Heart right ventricle (tissue), 16 donors: ENCODE measurements at regions of chr5 and their contacts with region 1.

Region 1: DNA sequence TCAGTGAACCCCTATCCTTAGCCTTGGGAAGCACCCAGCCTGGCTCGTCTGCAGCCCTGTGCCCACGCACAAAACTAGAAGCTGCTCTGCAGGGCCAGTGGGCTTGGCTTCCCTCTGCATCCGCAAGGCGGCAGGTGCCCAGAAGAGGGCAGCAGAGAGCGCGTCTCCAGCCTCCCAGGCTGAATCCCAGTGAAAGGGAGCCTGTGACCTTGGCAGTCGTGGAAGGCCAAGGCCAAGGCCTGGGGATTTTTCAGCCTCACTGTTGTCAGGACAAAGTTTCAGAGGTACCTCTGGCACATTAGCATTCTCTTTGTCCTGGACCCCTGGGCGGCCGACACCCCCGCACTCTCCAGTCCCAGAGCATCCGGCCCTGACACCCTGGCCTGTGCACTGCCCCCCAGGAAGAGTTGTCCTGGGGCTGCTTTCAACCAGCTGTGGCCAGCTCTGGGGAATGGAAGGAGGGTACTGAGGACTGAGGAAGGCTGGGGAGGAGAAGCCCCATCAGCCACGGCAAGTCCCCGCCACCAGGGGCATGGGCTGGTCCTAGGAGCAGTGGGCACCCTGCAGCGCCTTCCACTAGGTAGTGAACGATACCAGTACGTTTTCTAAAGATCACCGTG is 63.6 kb upstream of the IL17B start:
- DNase-seq: peak; percentile 83 to 90
- ATAC-seq: peak; percentile 81 to 91 (median 90)
- H3K4me3 ChIP-seq: no peak overlapping the region
- H3K27ac ChIP-seq: peak overlapping the region; percentile 60 to 90 (median 85)
- H3K4me1 ChIP-seq: peaks cover 6 to 61% (median 36%) of the 10 kb centered on the region in 9 donors
- H3K27me3 ChIP-seq: no peaks in the 10 kb centered on the region
- CTCF ChIP-seq: peak; percentile 90 to 97 (median 94)

Region 2: GRCh38 chr5:149254506-149254905 is 188.2 kb before region 1 on chr5:
- intact Hi-C with region 1: no loop called
- DNase-seq: no peak
- ATAC-seq: no peak
- H3K4me3 ChIP-seq: no peak overlapping the region
- H3K27ac ChIP-seq: no peak overlapping the region
- H3K4me1 ChIP-seq: no peaks in the 10 kb centered on the region
- H3K27me3 ChIP-seq: no peaks in the 10 kb centered on the region
- CTCF ChIP-seq: no peak

Region 3: DNA sequence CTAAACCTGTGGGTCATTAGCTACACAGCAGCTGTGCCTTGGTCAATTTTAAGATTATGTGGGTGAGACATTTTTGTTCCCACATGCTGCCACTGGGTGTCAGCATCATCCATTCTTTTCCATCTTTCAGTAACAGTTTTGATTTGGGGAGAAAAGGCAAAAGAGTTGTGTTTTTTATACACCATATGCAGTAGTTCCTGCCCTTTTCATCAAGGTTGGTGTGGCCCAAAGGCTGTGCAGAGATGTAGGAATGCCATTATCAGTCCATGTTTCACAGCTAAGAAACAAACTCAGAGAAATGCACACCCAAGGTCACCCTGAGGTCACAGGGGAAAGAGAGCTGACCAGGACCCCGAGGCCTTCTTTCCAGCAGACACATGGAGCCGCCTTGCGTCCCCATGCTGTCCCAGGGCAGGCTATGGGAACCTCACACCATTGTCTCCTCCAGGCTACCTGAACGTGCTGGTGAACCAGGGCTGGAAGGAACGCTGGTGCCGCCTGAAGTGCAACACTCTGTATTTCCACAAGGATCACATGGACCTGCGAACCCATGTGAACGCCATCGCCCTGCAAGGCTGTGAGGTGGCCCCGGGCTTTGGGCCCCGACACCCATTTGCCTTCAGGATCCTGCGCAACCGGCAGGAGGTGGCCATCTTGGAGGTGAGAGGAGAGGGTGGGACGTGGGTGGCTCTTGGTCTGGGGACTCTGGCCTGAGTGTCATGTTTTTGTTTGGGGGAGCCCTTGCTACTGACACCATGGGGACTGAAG is 125.2 kb before region 1 on chr5:
- intact Hi-C with region 1: no loop called
- DNase-seq: no peak
- ATAC-seq: no peak
- H3K4me3 ChIP-seq: no peak overlapping the region
- H3K27ac ChIP-seq: peak overlapping the region in 9 of 10 donors; percentile 3 to 89 (median 68)
- H3K4me1 ChIP-seq: peaks cover 0 to 58% (median 33%) of the 10 kb centered on the region in 9 donors
- H3K27me3 ChIP-seq: no peaks in the 10 kb centered on the region
- CTCF ChIP-seq: peak; percentile 29 to 73 (median 63)

Region 4: DNA sequence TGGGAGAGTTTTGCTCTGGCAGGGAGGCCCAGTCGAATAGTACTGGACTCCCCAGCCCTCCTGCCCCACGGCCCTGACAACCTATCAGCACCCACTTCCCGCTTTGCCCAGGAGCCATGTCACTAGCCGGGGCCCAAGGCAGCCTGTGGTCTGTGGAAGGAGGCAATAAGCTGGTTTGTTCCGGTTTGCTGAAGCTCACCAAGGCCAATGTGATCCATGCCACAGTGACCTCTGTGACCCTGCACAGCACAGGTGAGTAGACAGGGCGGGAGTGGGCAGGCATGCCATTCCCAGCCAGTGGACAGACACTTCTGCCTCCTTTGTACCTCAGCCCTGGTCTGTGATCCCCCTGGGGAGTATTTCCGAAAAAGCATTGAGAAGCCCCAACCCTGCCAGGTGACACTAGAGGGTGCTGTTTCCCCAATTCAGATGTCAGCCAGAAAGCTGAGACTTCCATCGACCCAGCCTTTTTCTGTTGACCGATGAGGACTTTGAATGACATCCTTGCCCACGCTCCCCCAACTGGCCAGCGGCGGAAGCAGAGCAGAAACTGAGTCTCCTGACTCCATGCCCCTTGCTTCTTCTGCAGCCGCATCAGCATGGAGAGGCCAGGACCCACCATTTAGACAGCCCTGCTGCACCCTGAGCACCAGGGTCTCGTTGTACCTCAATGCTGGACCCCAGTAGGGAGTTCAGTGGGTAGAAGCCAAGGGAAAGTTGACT is 75.3 kb before region 1 on chr5:
- intact Hi-C with region 1: no loop called
- DNase-seq: peak; percentile 37 to 75
- ATAC-seq: peak; percentile 43 to 66 (median 57)
- H3K4me3 ChIP-seq: no peak overlapping the region
- H3K27ac ChIP-seq: no peak overlapping the region
- H3K4me1 ChIP-seq: peaks cover 0 to 35% (median 12%) of the 10 kb centered on the region in 9 donors
- H3K27me3 ChIP-seq: no peaks in the 10 kb centered on the region
- CTCF ChIP-seq: peak; percentile 61 to 86 (median 82)

Region 5: GRCh38 chr5:149485655-149486425 is 43.2 kb after region 1 on chr5:
- intact Hi-C with region 1: loop called in 4 of 10 experiments (anchors 2 to 5 kb)
- DNase-seq: peak; percentile 47 to 94
- ATAC-seq: peak; percentile 84 to 92 (median 90)
- H3K4me3 ChIP-seq: no peak overlapping the region
- H3K27ac ChIP-seq: peak overlapping the region; percentile 82 to 94 (median 90)
- H3K4me1 ChIP-seq: peaks cover 21 to 64% (median 48%) of the 10 kb centered on the region in 9 donors
- H3K27me3 ChIP-seq: no peaks in the 10 kb centered on the region
- CTCF ChIP-seq: no peak

Region 6: GRCh38 chr5:149517461-149518122 is 74.9 kb after region 1 on chr5:
- intact Hi-C with region 1: no loop called
- DNase-seq: no peak
- ATAC-seq: peak in 7 of 8 donors; percentile 38 to 73 (median 60)
- H3K4me3 ChIP-seq: peak overlapping the region in 2 of 10 donors; percentile 5 to 18
- H3K27ac ChIP-seq: peak overlapping the region in 5 of 10 donors; percentile 2 to 54 (median 21)
- H3K4me1 ChIP-seq: peaks cover 0 to 100% (median 94%) of the 10 kb centered on the region in 9 donors
- H3K27me3 ChIP-seq: no peaks in the 10 kb centered on the region
- CTCF ChIP-seq: peak in 4 of 9 donors; percentile 11 to 43 (median 32)

Region 7: DNA sequence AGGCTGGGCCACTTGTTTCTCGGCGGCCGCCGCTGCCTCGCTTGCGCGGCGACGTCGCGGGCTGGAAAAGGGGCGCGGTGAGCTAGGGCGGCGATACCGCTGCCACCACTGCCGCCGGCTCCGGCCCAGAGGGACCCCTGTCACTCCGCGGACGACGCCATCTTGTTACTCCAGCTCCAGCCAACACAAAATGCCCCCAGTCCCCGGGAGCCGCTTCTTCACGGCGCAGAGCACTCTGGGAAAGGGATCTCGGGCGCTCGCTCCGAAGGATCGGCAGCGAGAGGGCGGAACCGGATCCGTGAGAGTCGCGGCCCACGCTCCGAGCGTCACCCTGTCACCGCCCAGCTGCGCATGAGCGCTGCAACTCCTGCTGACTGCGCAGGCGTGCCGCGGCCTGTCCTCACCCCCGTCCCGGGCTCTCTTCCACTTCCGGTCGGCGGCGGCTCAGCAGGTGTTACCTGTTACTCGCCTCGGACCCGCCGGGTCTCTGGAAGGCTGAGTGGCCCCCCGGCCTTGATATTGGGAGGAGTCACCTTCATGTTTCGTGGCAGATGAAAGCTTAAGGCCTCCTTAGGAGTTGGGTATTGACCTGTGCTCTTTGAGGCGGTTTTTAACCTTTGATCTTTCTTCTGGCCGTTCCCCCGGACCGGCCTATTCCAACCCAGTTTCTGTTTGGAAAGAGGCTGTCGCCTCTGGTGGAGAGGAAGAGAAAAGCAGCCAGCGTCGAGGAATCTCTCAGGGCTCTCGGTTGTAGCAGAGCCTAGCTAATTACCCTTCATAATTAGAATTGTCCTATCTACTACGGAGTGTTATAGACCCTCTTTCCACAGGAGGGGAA is 108.7 kb after region 1 on chr5 and contains the start of gene CSNK1A1:
- intact Hi-C with region 1: loop called in 5 of 10 experiments (anchors 1 to 5 kb)
- DNase-seq: peak; percentile 98 to 99
- ATAC-seq: peak; percentile 96 to 99 (median 98)
- H3K4me3 ChIP-seq: peak within 1 kb of the TSS; percentile 53 to 99 (median 84)
- H3K27ac ChIP-seq: peak within 1 kb of the TSS; percentile 88 to 100 (median 99)
- H3K4me1 ChIP-seq: peaks cover 7 to 49% (median 40%) of the 10 kb centered on the region in 9 donors
- H3K27me3 ChIP-seq: no peaks in the 10 kb centered on the region
- CTCF ChIP-seq: peak; percentile 64 to 87 (median 81)
- total RNA-seq, gene CSNK1A1: 174 to 363 (median 224) TPM

Region 8: DNA sequence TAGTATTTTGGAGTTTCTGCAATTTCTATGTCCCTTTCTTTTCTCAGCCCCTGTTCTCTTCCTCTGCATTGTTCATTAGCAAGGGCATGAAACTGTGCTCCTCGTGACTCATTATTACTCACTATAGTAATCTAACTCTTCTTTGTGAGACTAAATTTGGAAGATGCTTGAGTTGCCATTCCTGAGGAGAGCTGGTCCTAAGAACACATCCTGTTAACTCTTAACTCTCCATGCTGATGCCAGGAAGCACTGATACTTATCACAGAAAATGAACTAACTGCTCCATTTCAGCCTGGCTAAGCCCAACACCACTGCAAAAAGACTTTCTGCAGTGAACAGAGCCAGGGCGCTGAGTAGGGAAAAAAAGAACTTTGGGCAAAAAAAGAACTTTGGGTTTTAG is 119.2 kb after region 1 on chr5:
- intact Hi-C with region 1: loop called in 9 of 10 experiments (anchors 1 to 5 kb)
- DNase-seq: peak in 1 of 2 donors; percentile 34
- ATAC-seq: peak; percentile 60 to 95 (median 90)
- H3K4me3 ChIP-seq: peak overlapping the region in 5 of 10 donors; percentile 5 to 24 (median 20)
- H3K27ac ChIP-seq: peak overlapping the region; percentile 5 to 94 (median 84)
- H3K4me1 ChIP-seq: peaks cover 6 to 47% (median 39%) of the 10 kb centered on the region in 9 donors
- H3K27me3 ChIP-seq: no peaks in the 10 kb centered on the region
- CTCF ChIP-seq: no peak

Region 9: GRCh38 chr5:149567226-149567625 is 124.6 kb after region 1 on chr5:
- intact Hi-C with region 1: loop called in 8 of 10 experiments (anchors 1 to 5 kb)
- DNase-seq: no peak
- ATAC-seq: no peak
- H3K4me3 ChIP-seq: no peak overlapping the region
- H3K27ac ChIP-seq: no peak overlapping the region
- H3K4me1 ChIP-seq: peaks cover 0 to 27% (median 22%) of the 10 kb centered on the region in 9 donors
- H3K27me3 ChIP-seq: no peaks in the 10 kb centered on the region
- CTCF ChIP-seq: no peak

Region 10: GRCh38 chr5:149618581-149619251 is 176.0 kb after region 1 on chr5:
- intact Hi-C with region 1: loop called in 2 of 10 experiments (anchors 5 kb)
- DNase-seq: peak in 1 of 2 donors; percentile 57
- ATAC-seq: peak in 7 of 8 donors; percentile 36 to 77 (median 63)
- H3K4me3 ChIP-seq: no peak overlapping the region
- H3K27ac ChIP-seq: peak overlapping the region in 3 of 10 donors; percentile 1 to 43 (median 29)
- H3K4me1 ChIP-seq: peaks cover 0 to 25% (median 18%) of the 10 kb centered on the region in 9 donors
- H3K27me3 ChIP-seq: no peaks in the 10 kb centered on the region
- CTCF ChIP-seq: peak; percentile 53 to 80 (median 72)